PC-9 (cell line): ENCODE measurements at regions of chr5 and their contacts with region 1.

Region 1: DNA sequence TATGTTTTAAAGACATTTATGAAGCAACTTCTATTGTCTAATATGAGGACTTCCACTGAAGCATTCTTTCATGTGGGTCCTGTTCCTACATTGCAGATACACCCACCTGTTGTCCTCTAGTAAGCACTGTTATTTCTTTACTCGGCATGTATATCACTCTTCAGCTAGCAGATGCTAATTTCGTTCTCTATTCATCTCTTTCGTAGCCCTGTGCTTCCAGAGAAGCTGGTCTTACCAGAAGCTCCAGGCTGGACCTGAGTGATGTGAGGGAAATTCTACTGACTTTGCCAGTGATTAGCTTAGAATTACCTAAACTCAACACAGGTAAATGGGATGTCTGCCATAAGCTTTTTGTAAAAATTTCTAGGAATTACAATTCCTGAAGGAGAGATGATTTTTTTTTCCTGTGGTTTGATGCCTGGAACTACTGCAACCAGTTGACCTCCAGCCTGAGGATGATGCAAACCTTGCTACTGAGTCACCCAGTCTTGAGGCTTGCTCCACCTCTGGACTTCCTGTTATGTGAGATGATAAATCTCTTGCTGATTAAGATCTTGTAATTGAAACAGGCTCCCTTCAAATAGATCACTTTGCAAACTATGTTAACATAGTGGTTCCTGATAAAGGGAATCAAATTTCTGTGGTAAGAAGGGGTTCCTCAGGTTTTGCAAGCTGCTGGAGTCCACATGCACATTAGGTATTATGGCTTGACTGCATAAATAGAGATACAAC is 52.2 kb upstream of the SPINK5 start:
- DNase-seq: peak; percentile 71 to 94
- H3K4me3 ChIP-seq: no peak overlapping the region
- H3K27ac ChIP-seq: no peak overlapping the region
- H3K4me1 ChIP-seq: peaks cover 27% of the 10 kb centered on the region
- H3K27me3 ChIP-seq: peaks cover 17% of the 10 kb centered on the region; the same call in 1 of the 2 replicates
- CTCF ChIP-seq: no peak

Region 2: DNA sequence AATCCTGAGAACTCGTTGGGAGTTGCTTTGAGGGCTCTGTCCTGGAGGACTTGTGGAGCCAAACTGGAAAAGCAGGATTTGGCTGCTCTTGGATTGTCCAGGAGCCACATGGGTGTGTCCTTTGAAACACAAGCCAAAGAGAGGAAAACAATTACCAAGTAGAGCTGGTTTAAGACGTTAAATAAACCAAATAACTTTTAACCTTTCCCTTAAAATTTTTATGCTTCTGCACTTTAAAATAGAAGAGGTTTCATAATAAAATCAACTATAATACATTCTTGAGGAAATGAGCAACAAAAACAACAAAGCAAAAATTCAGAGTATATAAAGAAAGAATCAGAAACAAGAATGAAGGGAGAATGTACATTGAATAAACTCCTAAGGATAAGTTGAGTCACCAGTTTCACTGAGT is 118.7 kb before region 1 on chr5:
- CTCF ChIA-PET with region 1: no interaction called
- POLR2A ChIA-PET with region 1: no interaction called
- intact Hi-C with region 1: loop called (anchors 5 kb)
- DNase-seq: peak; percentile 76 to 87
- H3K4me3 ChIP-seq: peak overlapping the region; percentile 25; the same call in 1 of the 2 replicates
- H3K27ac ChIP-seq: peak overlapping the region; percentile 98
- H3K4me1 ChIP-seq: peaks cover 57% of the 10 kb centered on the region
- H3K27me3 ChIP-seq: no peaks in the 10 kb centered on the region
- CTCF ChIP-seq: no peak

Region 3: DNA sequence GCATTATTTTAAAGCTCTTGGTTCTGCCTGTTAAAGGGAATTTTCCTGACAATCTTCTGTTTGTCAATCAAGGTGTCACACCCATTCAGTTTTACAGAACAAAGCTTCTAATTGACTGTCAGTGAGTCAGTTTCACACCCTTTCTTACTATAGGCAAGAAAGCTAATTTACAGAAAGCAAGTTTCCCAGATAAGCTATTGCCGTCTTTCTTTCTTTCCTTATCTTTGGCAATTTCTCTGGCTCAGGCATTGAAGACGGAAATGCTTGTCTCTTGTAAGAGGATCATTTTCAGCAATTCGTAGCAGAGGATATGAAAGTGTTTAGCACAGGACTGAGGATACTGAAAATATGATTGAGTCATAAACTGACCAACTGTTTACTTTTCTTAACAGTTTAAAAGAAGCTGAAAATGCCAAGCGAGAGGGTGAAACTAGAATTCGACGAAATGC is 79.2 kb after region 1 on chr5:
- CTCF ChIA-PET with region 1: no interaction called
- POLR2A ChIA-PET with region 1: no interaction called
- intact Hi-C with region 1: loop called (anchors 5 kb)
- DNase-seq: peak; percentile 3 to 36
- H3K4me3 ChIP-seq: no peak overlapping the region
- H3K27ac ChIP-seq: no peak overlapping the region
- H3K4me1 ChIP-seq: no peaks in the 10 kb centered on the region; the same call in 1 of the 2 replicates
- H3K27me3 ChIP-seq: no peaks in the 10 kb centered on the region
- CTCF ChIP-seq: no peak